Activated B cell treated with CpG ODN at 0.5 μM for 24 hours (primary cell): ENCODE measurements at regions of chr4 and their contacts with region 1.

Region 1: DNA sequence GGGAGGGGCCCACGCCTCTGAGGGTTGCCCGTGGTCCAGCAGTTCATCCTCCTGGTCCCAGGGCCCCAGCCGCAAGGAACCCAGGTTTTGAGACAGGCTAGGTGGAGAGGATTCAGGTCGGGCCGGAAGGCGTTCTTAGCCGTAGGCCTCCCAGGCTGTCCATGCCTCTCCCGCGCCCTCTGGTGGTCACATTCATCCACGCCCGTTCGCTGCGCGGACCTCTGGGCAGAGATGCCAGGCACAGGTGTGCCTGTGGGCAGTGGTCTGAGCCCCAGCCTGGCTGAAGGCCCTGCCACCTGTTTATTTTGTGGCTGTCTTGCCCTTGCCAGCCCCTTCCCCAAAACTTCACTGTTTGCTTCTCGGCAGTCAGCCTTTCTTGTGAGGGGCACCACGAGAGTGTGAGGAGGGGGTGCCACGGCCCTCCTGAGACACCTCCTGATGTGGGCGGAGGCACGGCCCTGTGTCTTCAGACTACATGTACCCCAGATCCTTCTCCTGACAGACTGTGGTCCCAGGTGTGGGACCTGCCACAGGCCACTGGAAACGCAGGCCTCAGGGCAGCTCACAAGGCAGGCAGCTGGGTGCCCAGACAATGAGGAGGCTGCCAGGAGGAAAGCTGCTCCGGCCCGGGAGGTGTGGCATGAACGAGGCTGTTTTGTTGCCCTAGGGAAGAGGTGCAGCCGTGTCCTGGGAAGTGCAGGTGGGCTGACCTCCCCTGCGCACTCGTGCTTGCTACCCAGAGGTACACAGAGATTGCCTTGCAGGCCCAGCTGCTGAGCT is 5.0 kb downstream of the UVSSA start:
- DNase-seq: peak; percentile 84
- ATAC-seq: peak; percentile 25
- H3K4me3 Mint-ChIP-seq: no peak overlapping the region
- H3K27ac Mint-ChIP-seq: peak overlapping the region; percentile 18
- H3K4me1 Mint-ChIP-seq: peaks cover 26% of the 10 kb centered on the region
- H3K27me3 Mint-ChIP-seq: no peaks in the 10 kb centered on the region
- CTCF ChIP-seq: no peak

Region 2: GRCh38 chr4:1072830-1073446 is 279.1 kb before region 1 on chr4:
- CTCF ChIA-PET with region 1: no interaction called
- POLR2A ChIA-PET with region 1: no interaction called
- intact Hi-C with region 1: loop called (anchors 1 kb)
- DNase-seq: no peak
- ATAC-seq: peak; percentile 79
- H3K4me3 Mint-ChIP-seq: no peak overlapping the region
- H3K27ac Mint-ChIP-seq: no peak overlapping the region
- H3K4me1 Mint-ChIP-seq: peaks cover 12% of the 10 kb centered on the region
- H3K27me3 Mint-ChIP-seq: peaks cover 19% of the 10 kb centered on the region
- CTCF ChIP-seq: peak; percentile 8

Region 3: DNA sequence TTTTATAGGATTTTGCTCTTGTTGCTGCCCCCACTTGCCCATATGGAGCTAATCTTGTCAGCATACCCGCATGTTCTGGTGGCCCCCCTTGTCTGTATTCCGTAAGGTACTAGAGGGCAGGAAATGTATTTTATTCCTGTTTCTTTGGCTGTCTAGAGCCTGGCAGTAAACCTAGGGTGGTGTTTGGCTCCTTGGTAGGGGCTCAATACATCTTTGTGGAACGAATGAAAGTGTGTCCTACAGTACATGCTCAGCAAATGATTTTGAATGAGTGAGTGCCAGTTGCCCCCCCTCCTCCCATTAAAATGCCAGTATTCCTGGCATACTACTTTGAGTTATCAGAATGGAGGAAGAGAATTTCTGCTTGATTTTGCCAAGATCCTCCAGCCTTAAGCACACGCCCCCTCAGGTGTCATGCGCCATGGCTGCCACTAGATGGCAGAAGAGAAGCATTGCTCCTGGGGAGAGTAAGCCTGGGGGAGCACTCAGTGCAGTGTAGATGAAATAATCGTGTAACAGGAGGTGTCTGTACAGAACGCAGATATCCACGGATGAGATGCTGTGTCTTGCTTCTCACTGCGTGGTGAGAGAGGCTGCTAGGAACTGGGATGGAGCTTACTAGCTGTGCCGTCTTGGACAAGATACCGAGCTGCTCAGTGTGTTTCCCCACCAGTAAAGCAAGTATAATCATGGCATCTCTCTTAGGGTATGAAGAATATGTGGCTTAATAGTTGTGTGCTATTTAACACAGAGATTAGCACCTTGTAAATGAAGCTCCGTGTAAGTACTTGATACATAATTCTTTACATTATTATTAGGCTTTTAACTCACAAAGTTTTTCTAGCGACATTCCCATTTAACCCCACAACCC is 221.5 kb before region 1 on chr4:
- CTCF ChIA-PET with region 1: interaction called, 13 read pairs
- POLR2A ChIA-PET with region 1: interaction called, 5 read pairs
- intact Hi-C with region 1: loop called (anchors 1 kb)
- DNase-seq: peak; percentile 63
- ATAC-seq: peak; percentile 99
- H3K4me3 Mint-ChIP-seq: no peak overlapping the region
- H3K27ac Mint-ChIP-seq: peak overlapping the region; percentile 19
- H3K4me1 Mint-ChIP-seq: peaks cover 21% of the 10 kb centered on the region
- H3K27me3 Mint-ChIP-seq: peaks cover 2% of the 10 kb centered on the region
- CTCF ChIP-seq: peak; percentile 99

Region 4: DNA sequence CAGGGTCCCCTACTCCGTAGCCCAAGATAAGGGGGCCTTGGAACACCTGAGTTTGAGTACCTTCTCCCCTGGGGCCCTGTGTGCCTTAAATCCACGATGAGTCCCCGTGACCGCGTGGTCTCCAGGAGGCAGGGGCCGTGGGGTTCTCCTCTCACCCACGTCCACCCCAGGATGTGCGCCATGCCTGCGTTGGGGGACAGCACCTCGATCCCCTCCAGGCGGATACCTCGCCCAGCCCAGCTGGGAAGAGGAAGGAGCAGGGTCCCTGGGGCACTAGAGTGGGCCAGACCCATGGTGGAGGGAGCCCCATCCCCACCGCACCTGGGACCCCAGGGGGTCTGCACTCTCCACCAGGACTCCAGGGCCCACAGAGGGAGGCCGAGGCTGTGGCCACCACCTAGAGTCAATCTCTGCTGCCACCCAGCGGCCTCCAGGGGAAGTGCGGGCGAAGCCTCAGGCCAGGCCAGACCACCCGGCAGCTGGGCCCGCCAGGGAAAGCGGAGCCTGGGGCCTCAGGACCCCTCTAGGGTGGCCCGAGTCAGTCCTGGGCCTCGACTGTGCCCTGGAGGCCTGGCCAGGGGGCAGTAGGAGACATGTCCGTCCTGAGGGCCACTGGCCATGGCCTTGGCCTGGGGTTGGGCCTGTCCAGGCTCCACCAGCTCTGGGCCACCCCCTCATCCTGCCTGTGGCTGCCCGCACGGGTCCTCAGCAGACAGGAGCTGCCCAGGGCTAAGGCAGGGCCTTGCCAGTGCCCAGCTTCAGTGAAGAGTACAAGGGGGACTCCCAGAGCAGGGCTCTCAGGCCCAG is 277.1 kb after region 1 on chr4:
- CTCF ChIA-PET with region 1: interaction called, 4 read pairs
- POLR2A ChIA-PET with region 1: no interaction called
- intact Hi-C with region 1: loop called (anchors 1 kb)
- DNase-seq: peak; percentile 62
- ATAC-seq: peak; percentile 81
- H3K4me3 Mint-ChIP-seq: no peak overlapping the region
- H3K27ac Mint-ChIP-seq: no peak overlapping the region
- H3K4me1 Mint-ChIP-seq: no peaks in the 10 kb centered on the region
- H3K27me3 Mint-ChIP-seq: no peaks in the 10 kb centered on the region
- CTCF ChIP-seq: peak; percentile 75